K562 (cell line): ENCODE measurements at regions of chr3 and their contacts with region 1.

Region 1: GRCh38 chr3:100316641-100317069 is 17.9 kb upstream of the NIT2 start:
- DNase-seq: peak; percentile 13 to 68 (median 22)
- ATAC-seq: peak; percentile 92
- H3K4me3 ChIP-seq: no peak overlapping the region
- H3K27ac ChIP-seq: no peak overlapping the region
- H3K4me1 ChIP-seq: no peaks in the 10 kb centered on the region; a peak in 1 of 5 replicates
- H3K27me3 ChIP-seq: no peaks in the 10 kb centered on the region
- CTCF ChIP-seq: peak; percentile 32 to 64 (median 60); a peak in 5 of 6 replicates
- EP300 ChIP-seq: no peak
- POLR2A ChIP-seq: no peak
- RAD21 ChIP-seq: peak; percentile 61 to 66

Region 2: DNA sequence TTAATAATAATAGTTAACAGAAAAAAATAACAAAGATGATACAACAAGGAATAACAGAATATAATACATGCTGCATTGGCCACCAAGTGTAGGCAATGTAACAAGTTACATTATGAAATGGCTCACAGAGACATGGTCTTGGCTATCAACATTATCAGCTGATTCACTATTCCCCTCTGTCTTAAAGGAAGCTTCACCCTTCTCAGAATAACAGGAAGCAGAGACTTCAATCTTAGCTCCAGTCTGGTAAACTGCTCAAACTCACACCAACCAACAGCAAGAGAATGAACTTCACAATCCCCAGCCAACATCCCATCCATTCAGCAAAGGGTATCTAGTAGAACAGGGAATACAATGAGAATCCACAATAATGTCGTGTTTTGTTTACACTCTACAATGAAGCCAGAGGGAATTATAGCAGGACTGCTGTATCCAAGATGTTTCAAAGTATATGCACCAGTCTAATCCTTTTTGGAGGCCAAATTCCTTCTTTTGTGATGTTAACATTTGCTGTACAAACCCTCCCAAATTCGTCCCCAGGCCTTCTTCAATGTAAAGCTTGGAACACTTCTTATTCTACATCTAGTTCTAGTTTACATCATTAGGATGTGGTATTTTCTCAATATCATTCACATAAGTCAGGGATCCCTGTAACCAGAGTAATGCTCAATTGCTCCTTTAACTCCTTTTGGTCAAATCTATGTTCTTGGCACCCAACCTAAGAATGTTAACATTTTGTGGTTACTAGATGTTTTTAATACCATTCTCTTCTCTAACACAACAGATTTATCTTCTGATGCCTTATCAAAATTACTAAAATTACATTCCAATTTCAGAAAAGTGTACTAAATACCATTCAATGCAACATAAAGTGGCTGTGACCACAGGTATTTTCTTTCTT is 551.4 kb before region 1 on chr3:
- CTCF ChIA-PET with region 1: no interaction called
- POLR2A ChIA-PET with region 1: no interaction called
- in situ Hi-C with region 1: no loop called
- intact Hi-C with region 1: no loop called
- DNase-seq: no peak
- ATAC-seq: peak; percentile 46; the same call in 1 of the 3 replicates
- H3K4me3 ChIP-seq: no peak overlapping the region
- H3K27ac ChIP-seq: no peak overlapping the region
- H3K4me1 ChIP-seq: no peaks in the 10 kb centered on the region; a peak in 1 of 5 replicates
- H3K27me3 ChIP-seq: 0 out of 5 replicates have a peak, but pooled peaks cover 0 to 4% of the 10 kb centered on the region in 2 experiments
- CTCF ChIP-seq: no peak
- EP300 ChIP-seq: no peak
- POLR2A ChIP-seq: no peak
- RAD21 ChIP-seq: no peak

Region 3: DNA sequence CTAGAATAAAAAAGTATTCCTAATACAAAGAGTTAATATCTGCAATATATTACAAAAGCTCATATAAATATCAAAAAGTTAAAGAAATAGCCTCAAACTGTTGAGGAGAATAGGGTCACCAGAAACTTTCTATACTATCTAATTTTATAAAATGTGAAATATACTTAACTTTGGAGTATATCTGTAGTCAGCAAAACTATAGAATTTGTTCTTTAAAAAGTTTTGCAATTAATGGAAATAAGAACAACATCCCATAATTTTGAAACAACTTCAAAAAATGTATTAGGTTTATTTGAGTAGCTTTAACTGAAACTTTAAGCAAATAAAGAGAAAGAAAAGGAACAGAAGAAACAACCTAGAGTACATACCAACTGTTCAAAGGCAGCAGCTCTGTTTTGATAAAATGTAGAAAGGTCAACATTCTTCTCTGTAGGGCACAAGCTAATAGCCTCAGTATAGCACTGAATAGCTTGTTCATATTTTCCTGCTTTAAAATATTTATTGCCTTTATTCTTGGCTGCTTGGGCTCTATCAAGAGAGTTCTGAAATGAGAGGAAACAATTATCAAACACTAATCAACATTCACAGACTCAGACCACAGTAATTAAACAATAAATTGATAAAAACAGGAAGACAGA is 69.9 kb after region 1 on chr3:
- CTCF ChIA-PET with region 1: no interaction called
- POLR2A ChIA-PET with region 1: no interaction called
- in situ Hi-C with region 1: no loop called
- intact Hi-C with region 1: loop called (anchors 5 kb)
- DNase-seq: no peak
- ATAC-seq: no peak
- H3K4me3 ChIP-seq: no peak overlapping the region
- H3K27ac ChIP-seq: no peak overlapping the region
- H3K4me1 ChIP-seq: no peaks in the 10 kb centered on the region
- H3K27me3 ChIP-seq: no peaks in the 10 kb centered on the region
- CTCF ChIP-seq: no peak
- EP300 ChIP-seq: no peak
- POLR2A ChIP-seq: no peak
- RAD21 ChIP-seq: no peak

Region 4: DNA sequence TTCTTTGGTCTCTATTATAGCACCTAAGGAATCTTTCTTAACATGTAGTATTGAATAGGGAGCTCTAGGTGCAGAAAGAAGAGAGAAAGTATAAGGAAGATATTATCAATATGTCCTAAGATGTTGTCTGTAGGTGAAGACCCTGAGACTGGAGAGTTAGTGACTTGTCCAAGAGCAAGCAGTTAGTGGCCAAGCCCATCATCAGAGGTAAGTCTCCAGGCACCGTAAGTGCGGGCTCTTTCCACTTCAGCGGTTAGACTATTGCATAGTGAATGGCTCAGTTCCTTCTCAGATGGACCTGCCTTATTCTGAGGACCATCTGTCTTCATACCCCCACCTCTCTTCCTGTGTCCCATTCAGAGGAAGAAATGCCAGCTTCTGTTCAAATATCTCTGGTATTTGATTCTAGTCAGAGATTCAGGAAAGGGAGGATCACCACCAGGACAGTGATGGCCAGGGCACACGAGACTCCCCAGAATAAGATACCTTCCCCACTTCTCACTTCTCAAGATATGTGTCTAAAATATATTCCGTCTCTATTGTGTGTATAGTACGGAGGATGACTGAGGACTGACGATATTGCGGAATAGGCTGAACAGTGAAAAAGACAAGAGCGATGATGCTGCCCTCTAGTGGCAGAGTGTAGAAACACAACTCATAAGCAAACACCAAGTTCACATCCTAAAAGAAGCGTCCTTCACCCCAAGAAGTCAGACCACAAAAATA is 273.6 kb after region 1 on chr3:
- CTCF ChIA-PET with region 1: interaction called, 12 read pairs
- POLR2A ChIA-PET with region 1: no interaction called
- in situ Hi-C with region 1: loop called (anchors 10 kb)
- intact Hi-C with region 1: loop called (anchors 1 kb)
- DNase-seq: peak; percentile 51 to 73 (median 57)
- ATAC-seq: peak; percentile 88
- H3K4me3 ChIP-seq: no peak overlapping the region
- H3K27ac ChIP-seq: no peak overlapping the region
- H3K4me1 ChIP-seq: no peaks in the 10 kb centered on the region; a peak in 1 of 5 replicates
- H3K27me3 ChIP-seq: no peaks in the 10 kb centered on the region
- CTCF ChIP-seq: peak; percentile 55 to 80 (median 68)
- EP300 ChIP-seq: no peak
- POLR2A ChIP-seq: no peak
- RAD21 ChIP-seq: peak; percentile 85 to 90

Region 5: DNA sequence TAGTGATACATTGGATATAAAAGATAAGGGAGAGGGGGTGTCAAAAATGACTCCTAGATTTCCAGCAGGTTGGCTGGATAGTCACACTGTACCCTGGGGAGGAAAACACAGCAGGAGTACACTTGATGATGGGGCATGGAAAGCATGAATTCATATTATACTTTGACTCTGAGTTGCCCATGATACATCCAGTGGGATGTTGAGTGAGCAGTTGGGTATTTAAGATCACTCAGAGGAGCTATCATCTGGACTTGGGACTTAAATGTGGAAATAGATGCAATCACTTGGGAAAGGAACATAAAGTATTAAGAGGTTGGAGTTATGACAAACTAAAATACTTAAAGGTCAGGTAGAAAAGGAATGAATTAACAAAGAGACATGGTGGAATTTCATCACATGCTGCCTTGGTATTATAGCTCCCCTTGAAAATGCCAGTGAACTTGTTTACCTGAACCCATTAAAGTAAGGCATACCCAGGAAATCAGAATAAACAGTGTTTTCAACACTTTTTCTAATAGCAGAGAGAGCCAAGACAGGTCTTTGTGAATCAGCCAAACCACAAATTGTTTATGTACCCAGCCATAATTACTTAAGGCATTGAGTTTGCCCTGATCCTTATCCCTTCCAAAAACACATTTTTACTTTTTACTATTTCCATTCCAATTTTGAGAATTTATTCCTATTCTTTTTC is 726.5 kb after region 1 on chr3:
- CTCF ChIA-PET with region 1: no interaction called
- POLR2A ChIA-PET with region 1: no interaction called
- in situ Hi-C with region 1: no loop called
- intact Hi-C with region 1: no loop called
- DNase-seq: no peak
- ATAC-seq: no peak
- H3K4me3 ChIP-seq: no peak overlapping the region
- H3K27ac ChIP-seq: no peak overlapping the region
- H3K4me1 ChIP-seq: no peaks in the 10 kb centered on the region
- H3K27me3 ChIP-seq: no peaks in the 10 kb centered on the region
- CTCF ChIP-seq: no peak
- EP300 ChIP-seq: no peak
- POLR2A ChIP-seq: no peak
- RAD21 ChIP-seq: no peak